Sigmoid colon (tissue), 7 donors: ENCODE measurements at regions of chr2 and their contacts with region 1.

Region 1: GRCh38 chr2:159712143-159712928 is at the start of gene MARCHF7:
- DNase-seq: peak; percentile 98
- H3K4me3 ChIP-seq: peak within 1 kb of the TSS; percentile 92 to 95 (median 92)
- H3K27ac ChIP-seq: peak within 1 kb of the TSS; percentile 97 to 99 (median 98)
- H3K4me1 ChIP-seq: peaks cover 0 to 52% (median 48%) of the 10 kb centered on the region in 4 donors
- H3K27me3 ChIP-seq: no peaks in the 10 kb centered on the region
- CTCF ChIP-seq: peak in 2 of 4 experiments; percentile 27 to 34
- EP300 ChIP-seq: peak in 1 of 4 donors; percentile 64
- POLR2A ChIP-seq: peak; percentile 94 to 97
- total RNA-seq, gene MARCHF7: 89.9 to 112 (median 103) TPM

Region 2: DNA sequence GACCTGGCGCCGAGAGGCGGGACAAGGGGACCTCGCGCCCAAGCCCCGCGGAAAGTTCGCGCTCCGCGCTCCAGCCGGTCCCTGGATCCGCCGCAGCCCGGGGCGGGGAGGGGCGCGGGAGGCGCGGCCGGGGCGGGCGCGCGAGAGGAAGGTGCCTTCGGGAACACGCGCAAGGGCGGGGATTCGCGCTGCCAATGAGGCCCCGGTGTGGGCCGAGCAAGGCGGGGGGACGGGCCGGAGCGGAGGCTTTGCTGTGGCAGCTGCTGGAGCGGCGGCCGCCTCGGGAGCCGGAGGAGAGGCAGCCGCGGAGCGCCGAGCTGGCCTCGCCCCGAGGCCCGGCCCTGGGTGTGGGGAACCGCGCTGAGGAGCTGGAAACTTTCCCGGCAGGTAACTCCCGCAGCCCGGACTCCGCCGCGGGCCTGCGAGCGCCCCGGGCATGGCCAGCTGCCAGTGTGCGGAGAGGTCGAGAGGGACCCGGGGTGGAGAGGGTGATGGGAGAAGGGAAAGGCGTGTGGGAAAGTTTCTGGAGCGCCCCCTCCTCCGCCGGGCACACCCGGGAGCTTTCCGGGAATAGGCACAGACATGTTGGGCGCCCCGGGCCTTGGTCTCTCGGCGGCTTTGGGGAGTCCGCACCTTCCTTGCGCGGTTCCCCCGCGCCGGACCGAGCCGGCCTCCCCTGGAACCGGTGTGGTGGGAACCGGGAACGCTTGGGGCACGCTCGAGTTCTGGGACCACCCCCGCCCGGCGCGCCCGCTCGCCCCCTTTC is 743.8 kb before region 1 on chr2 and contains the start of gene TANC1:
- intact Hi-C with region 1: loop called (anchors 5 kb)
- DNase-seq: peak; percentile 96
- H3K4me3 ChIP-seq: peak within 1 kb of the TSS; percentile 65 to 82 (median 76)
- H3K27ac ChIP-seq: peak within 1 kb of the TSS; percentile 89 to 96 (median 92)
- H3K4me1 ChIP-seq: peaks cover 0 to 49% (median 40%) of the 10 kb centered on the region in 4 donors
- H3K27me3 ChIP-seq: no peaks in the 10 kb centered on the region
- CTCF ChIP-seq: no peak
- EP300 ChIP-seq: no peak
- POLR2A ChIP-seq: peak; percentile 80 to 89
- total RNA-seq, gene TANC1: 47.0 to 74.5 (median 56.9) TPM

Region 3: GRCh38 chr2:159286709-159287441 is 425.5 kb before region 1 on chr2:
- intact Hi-C with region 1: loop called (anchors 10 kb)
- DNase-seq: peak; percentile 98
- H3K4me3 ChIP-seq: peak overlapping the region; percentile 74 to 99 (median 84)
- H3K27ac ChIP-seq: peak overlapping the region; percentile 87 to 88 (median 88)
- H3K4me1 ChIP-seq: peaks cover 0 to 23% (median 11%) of the 10 kb centered on the region in 4 donors
- H3K27me3 ChIP-seq: no peaks in the 10 kb centered on the region
- CTCF ChIP-seq: no peak
- EP300 ChIP-seq: no peak
- POLR2A ChIP-seq: peak; percentile 56 to 63

Region 4: DNA sequence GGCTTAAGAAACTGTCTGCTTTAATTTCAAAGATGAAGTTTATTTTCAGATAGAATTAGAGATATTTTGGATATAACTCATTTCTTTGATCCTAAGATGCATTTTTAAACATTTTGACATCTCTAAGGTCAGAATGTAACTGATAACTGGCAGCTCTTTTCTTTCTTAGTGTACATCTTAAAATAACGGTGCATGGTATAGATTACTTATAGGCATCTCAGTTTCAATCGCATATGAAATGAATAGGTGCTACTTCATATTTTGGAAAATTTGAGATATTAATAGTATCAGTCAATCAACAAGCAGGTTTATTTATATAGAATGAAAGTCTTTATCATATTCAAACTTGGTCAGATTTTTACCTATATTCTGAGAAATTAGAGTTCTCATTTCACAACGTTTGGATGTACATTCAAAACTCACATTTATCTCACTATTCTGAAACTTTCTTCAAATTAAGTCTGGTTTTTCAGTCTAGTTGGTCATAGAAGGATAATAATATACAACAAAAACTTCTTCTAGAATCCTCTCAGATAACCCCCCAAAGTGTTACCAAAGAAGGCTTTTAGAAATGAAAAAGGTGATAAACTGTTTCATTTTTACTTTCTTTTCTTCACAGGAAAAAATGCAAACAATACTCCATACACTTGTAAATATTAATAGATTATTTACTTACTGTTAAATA is 303.1 kb before region 1 on chr2:
- intact Hi-C with region 1: no loop called
- DNase-seq: no peak
- H3K4me3 ChIP-seq: no peak overlapping the region
- H3K27ac ChIP-seq: no peak overlapping the region
- H3K4me1 ChIP-seq: no peaks in the 10 kb centered on the region
- H3K27me3 ChIP-seq: no peaks in the 10 kb centered on the region
- CTCF ChIP-seq: no peak
- EP300 ChIP-seq: no peak
- POLR2A ChIP-seq: no peak

Region 5: DNA sequence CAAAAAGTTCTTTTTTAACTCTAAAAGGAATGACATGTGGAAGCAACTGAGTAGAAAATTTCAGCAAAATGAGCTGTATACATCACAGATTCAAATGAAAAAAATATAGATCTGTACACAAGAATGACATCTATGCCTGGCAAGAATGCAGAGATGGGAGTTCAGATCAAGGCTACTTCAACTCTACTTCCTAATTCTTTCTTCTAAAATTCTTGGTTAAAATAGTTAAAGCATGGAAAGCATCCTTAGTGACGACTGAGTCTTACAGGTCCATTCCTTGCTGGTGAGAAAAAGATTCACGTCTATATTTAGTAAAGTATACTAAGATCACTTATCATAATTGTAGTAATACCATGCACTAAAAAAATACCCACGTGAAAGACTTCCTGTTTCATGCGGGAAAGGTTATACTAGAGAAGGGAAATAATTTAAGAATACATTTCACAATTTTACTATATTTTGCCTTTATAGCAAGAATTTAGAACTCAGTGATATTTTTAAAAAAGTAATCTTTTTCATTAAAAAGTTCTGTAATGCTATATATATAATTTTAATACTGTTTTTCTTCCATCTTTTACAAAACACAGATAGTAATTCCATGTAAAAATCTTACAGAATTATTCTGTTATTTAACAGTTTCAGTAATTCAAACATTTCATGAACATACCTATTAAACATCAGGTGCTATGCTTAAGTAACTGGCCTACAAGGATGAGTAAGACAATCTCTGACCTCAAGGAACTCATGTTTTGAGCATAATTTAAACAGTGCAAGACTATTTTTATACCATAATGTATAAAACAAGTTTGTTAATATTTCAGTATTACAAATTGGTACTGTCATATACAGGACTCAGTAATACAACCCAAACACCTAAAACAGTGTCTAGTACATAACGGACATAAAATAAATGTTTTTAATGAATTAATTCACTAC is 255.6 kb before region 1 on chr2:
- intact Hi-C with region 1: loop called (anchors 5 kb)
- DNase-seq: no peak
- H3K4me3 ChIP-seq: no peak overlapping the region
- H3K27ac ChIP-seq: peak overlapping the region in 2 of 4 donors; percentile 43 to 46
- H3K4me1 ChIP-seq: peaks cover 0 to 49% (median 37%) of the 10 kb centered on the region in 4 donors
- H3K27me3 ChIP-seq: no peaks in the 10 kb centered on the region
- CTCF ChIP-seq: no peak
- EP300 ChIP-seq: no peak
- POLR2A ChIP-seq: no peak

Region 6: DNA sequence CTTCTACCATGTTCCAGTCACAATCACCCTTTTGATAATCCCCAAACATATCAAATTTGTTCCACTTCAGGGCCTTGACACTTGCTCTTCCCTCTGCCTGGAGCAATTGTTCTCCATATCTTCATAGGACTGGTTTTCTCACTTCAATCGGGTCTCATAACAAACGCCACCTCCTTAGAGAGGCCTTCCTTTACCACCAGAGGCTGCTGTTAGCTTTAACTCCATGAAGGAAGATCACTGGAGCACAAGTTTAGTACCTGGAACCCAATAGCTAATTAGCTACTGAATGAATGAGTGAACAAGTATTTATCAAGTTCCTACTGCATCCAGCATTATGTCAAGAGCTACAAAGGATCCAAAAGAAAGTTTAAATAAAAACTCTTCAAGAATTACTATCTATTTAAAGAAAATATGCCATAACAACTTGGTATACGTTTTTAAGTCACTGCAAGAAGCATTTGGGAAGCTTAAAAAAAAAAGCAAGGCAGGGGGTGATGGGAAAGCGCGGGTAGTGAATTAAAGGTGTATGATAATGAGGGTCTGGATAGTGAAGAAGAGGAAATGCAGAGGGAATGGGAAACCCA is 154.8 kb before region 1 on chr2:
- intact Hi-C with region 1: loop called (anchors 10 kb)
- DNase-seq: no peak
- H3K4me3 ChIP-seq: no peak overlapping the region
- H3K27ac ChIP-seq: no peak overlapping the region
- H3K4me1 ChIP-seq: peaks cover 0 to 19% (median 9%) of the 10 kb centered on the region in 4 donors
- H3K27me3 ChIP-seq: no peaks in the 10 kb centered on the region
- CTCF ChIP-seq: peak in 2 of 4 experiments; percentile 39 to 45
- EP300 ChIP-seq: no peak
- POLR2A ChIP-seq: no peak

Region 7: GRCh38 chr2:159615140-159615951 is 97.0 kb before region 1 on chr2:
- intact Hi-C with region 1: loop called (anchors 1 kb)
- DNase-seq: peak; percentile 97
- H3K4me3 ChIP-seq: peak overlapping the region; percentile 75 to 94 (median 85)
- H3K27ac ChIP-seq: peak overlapping the region; percentile 95 to 99 (median 98)
- H3K4me1 ChIP-seq: peaks cover 0 to 48% (median 32%) of the 10 kb centered on the region in 4 donors
- H3K27me3 ChIP-seq: no peaks in the 10 kb centered on the region
- CTCF ChIP-seq: no peak
- EP300 ChIP-seq: no peak
- POLR2A ChIP-seq: peak; percentile 88 to 89

Region 8: GRCh38 chr2:159797543-159798375 is 85.4 kb after region 1 on chr2 and contains the start of gene CD302:
- intact Hi-C with region 1: loop called (anchors 5 kb)
- DNase-seq: peak; percentile 84
- H3K4me3 ChIP-seq: peak within 1 kb of the TSS; percentile 68 to 93 (median 76)
- H3K27ac ChIP-seq: peak within 1 kb of the TSS; percentile 72 to 81 (median 78)
- H3K4me1 ChIP-seq: peaks cover 0 to 20% (median 9%) of the 10 kb centered on the region in 4 donors
- H3K27me3 ChIP-seq: no peaks in the 10 kb centered on the region
- CTCF ChIP-seq: peak in 1 of 4 experiments; percentile 9
- EP300 ChIP-seq: no peak
- POLR2A ChIP-seq: no peak
- total RNA-seq, gene CD302: 42.4 to 67.6 (median 53.6) TPM